AG04449 (cell line): ENCODE measurements at regions of chr5 and their contacts with region 1.

Region 1: GRCh38 chr5:172188033-172188892 is at the start of gene STK10:
- DNase-seq: peak; percentile 42
- H3K4me3 ChIP-seq: peak within 1 kb of the TSS; percentile 93
- CTCF ChIP-seq: peak; percentile 98

Region 2: DNA sequence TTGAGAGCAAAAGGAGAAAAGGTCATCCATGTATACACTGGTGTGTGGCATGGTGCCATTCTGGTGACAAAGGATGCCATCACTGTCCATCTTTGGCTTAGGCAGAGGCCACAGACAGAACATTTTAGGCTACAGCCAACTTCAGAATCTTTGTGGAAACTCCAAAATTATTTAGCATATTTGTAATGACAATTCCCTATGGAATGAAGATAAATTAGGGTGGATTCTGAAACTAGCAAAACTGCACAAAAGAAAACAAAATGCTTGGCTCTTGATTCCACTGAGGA is 274.3 kb before region 1 on chr5:
- CTCF ChIA-PET with region 1: interaction called, 48 read pairs
- POLR2A ChIA-PET with region 1: no interaction called
- DNase-seq: no peak
- H3K4me3 ChIP-seq: no peak overlapping the region
- CTCF ChIP-seq: no peak

Region 3: GRCh38 chr5:172071289-172071875 is 116.9 kb before region 1 on chr5:
- CTCF ChIA-PET with region 1: interaction called, 29 read pairs
- POLR2A ChIA-PET with region 1: no interaction called
- DNase-seq: no peak
- H3K4me3 ChIP-seq: no peak overlapping the region
- CTCF ChIP-seq: no peak

Region 4: DNA sequence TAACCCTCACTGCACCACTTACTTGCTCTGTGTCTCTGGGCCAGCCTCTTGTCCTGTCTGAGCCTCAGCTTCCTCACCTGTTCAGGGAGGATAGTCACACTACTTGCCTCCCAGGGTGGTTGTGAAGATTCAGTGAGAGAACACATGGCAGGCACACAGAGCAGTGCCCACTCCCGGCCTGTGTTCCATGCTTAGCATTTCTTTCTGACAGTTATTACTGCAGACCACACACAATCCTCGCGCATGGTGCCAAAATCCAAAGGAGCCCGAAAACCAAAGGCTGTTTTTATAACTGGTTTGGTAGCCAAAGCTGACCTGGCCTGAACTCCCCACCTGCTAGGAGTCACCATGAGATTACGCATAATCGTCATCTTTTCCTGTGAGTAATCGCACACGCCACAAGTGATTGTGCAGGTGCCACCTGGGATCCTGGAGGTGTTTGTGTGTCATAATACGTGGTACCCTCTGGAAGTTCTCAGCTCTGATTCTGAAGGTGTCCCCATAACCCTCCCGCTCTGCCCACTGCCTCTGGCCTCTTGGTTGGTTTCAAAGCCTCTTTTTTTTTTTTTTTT is 97.2 kb before region 1 on chr5:
- CTCF ChIA-PET with region 1: interaction called, 20 read pairs
- POLR2A ChIA-PET with region 1: interaction called, 3 read pairs
- DNase-seq: no peak
- H3K4me3 ChIP-seq: no peak overlapping the region
- CTCF ChIP-seq: no peak

Region 5: GRCh38 chr5:172162323-172162986 is 25.8 kb before region 1 on chr5:
- CTCF ChIA-PET with region 1: interaction called, 16 read pairs
- POLR2A ChIA-PET with region 1: no interaction called
- DNase-seq: no peak
- H3K4me3 ChIP-seq: no peak overlapping the region
- CTCF ChIP-seq: peak; percentile 23

Region 6: GRCh38 chr5:172207511-172207910 is 19.2 kb after region 1 on chr5:
- CTCF ChIA-PET with region 1: interaction called, 25 read pairs
- POLR2A ChIA-PET with region 1: interaction called, 3 read pairs
- DNase-seq: no peak
- H3K4me3 ChIP-seq: no peak overlapping the region
- CTCF ChIP-seq: no peak

Region 7: DNA sequence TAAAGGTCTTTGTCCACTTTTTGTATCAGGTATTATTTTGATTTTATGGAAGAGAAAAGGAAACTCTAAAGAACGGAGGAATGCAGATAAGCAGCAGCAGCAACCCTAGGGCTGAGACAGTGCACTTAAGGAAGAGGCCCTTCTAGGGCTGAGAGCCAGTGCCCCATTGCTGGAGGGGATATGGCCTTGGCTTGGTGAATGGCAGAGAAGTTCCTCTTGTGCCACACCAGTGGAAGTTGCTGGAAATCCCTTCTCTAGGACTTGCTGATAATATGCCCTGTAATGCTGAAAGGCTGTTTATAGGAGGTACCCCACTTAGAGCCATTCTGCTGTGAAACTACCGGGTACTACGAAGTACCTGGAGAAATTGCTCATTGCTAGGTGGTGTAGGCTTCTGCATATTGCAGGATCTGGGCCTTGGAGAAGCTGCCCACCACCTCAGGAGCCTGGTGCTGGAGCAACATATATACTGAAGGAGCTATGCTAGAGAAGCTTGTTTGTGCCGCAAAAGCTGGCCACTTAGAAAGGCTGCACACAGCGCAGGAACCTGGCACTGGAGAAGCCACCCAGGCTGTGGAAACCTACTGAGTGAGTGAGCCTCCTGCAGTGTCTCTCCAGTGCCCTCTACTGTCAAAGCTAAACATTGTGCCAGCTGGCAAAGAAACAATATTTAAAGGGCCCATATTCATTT is 104.9 kb after region 1 on chr5:
- CTCF ChIA-PET with region 1: interaction called, 16 read pairs
- POLR2A ChIA-PET with region 1: no interaction called
- DNase-seq: no peak
- H3K4me3 ChIP-seq: no peak overlapping the region
- CTCF ChIP-seq: peak; percentile 81